Sigmoid colon (tissue), 7 donors: ENCODE measurements at regions of chr4 and their contacts with region 1.

Region 1: GRCh38 chr4:159946983-159947615 is 844.2 kb downstream of the RAPGEF2 start:
- DNase-seq: no peak
- H3K4me3 ChIP-seq: no peak overlapping the region
- H3K27ac ChIP-seq: no peak overlapping the region
- H3K4me1 ChIP-seq: no peaks in the 10 kb centered on the region
- H3K27me3 ChIP-seq: no peaks in the 10 kb centered on the region
- CTCF ChIP-seq: peak in 3 of 4 experiments; percentile 22 to 71 (median 31)
- EP300 ChIP-seq: no peak
- POLR2A ChIP-seq: no peak

Region 2: DNA sequence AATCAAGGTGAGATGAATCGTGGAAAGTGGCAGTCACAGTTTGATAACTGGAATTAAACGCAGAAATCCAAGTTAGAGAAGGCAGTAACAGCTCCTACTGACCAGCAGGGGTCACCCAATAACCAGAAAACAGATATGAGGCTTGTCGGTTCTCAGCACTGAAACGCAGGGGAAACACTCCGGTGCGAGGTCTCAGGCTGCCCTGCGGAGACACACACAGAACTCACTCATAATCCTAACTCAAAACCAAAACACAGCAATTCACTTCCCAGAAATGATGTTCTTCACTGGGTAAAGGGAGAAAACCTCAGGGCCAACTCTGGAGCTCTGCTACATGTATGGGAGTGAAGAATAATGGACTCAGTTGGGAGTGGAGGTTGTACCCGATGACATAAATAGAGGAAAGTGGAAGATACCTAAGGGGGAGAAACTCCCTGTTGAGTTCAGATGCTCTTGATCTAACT is 459.8 kb before region 1 on chr4:
- intact Hi-C with region 1: loop called (anchors 10 kb)
- DNase-seq: no peak
- H3K4me3 ChIP-seq: no peak overlapping the region
- H3K27ac ChIP-seq: no peak overlapping the region
- H3K4me1 ChIP-seq: no peaks in the 10 kb centered on the region
- H3K27me3 ChIP-seq: no peaks in the 10 kb centered on the region
- CTCF ChIP-seq: peak in 3 of 4 experiments; percentile 60 to 70 (median 63)
- EP300 ChIP-seq: no peak
- POLR2A ChIP-seq: no peak

Region 3: DNA sequence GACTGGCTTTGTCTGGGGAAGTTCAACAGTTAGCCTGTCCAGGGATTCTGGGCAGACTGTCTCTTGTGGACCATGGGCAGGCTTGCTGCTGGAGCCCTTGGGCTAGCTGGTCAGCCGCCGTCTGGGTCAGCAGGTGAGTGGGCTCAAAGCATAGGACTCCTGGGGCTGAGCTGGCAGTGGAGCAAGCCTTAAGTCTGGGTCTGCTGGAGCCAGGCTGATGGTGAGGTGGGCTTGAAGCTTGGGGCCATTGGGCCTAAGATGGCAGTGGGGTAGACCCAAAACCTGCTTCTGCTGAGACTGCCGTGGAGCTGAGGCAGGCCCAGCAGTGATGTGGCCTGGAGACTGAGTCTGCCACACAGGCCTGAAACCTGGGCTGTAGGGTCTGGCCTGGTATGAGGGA is 199.1 kb before region 1 on chr4:
- intact Hi-C with region 1: no loop called
- DNase-seq: no peak
- H3K4me3 ChIP-seq: no peak overlapping the region
- H3K27ac ChIP-seq: no peak overlapping the region
- H3K4me1 ChIP-seq: no peaks in the 10 kb centered on the region
- H3K27me3 ChIP-seq: no peaks in the 10 kb centered on the region
- CTCF ChIP-seq: no peak
- EP300 ChIP-seq: no peak
- POLR2A ChIP-seq: no peak

Region 4: DNA sequence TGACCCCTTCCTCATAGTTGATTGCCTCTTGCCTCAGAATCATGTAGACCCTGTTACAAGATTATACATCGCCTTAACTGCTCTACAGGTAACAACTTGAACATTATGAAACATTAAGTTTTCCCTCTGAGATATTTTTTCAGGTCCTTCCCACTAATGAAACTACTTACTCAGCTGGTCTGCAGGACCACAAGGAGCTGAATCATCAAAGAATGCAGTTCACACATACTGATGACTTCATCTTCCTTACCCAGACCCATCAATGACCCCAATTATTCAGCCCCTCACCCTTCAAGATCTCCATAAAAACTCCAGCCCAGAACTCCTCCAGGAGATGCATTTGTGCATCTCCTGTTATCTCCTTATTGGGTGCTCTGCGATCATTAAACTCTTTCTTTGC is 123.4 kb before region 1 on chr4:
- intact Hi-C with region 1: no loop called
- DNase-seq: no peak
- H3K4me3 ChIP-seq: no peak overlapping the region
- H3K27ac ChIP-seq: no peak overlapping the region
- H3K4me1 ChIP-seq: no peaks in the 10 kb centered on the region
- H3K27me3 ChIP-seq: no peaks in the 10 kb centered on the region
- CTCF ChIP-seq: no peak
- EP300 ChIP-seq: no peak
- POLR2A ChIP-seq: no peak

Region 5: DNA sequence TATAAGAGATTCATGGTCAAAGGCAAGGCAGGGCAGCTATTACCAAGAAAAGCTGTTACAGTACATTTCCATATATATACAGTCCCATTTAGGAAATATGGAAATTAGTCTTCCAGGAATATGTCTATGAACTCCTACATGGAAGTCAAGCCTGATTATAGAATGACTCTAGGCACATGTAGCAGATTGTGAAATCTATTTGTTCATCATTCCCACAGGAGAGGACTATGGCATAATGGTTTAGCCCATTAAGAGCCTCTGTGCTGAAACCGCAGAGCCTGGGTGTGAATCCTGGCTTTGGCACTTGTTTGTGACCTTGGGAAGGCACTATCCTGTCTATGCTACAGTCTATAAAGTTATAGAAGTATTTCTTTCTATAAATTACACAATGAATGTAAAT is 79.4 kb before region 1 on chr4:
- intact Hi-C with region 1: no loop called
- DNase-seq: no peak
- H3K4me3 ChIP-seq: no peak overlapping the region
- H3K27ac ChIP-seq: no peak overlapping the region
- H3K4me1 ChIP-seq: no peaks in the 10 kb centered on the region
- H3K27me3 ChIP-seq: no peaks in the 10 kb centered on the region
- CTCF ChIP-seq: no peak
- EP300 ChIP-seq: no peak
- POLR2A ChIP-seq: no peak